ENCODE measurements at regions of chr4 and their contacts with region 1.

Region 1: GRCh38 chr4:44162538-44163270 is 285.9 kb downstream of the KCTD8 start:
- DNase-seq: no peak
- H3K4me3 ChIP-seq: no peak overlapping the region
- H3K27ac ChIP-seq: no peak overlapping the region
- H3K4me1 ChIP-seq: no peaks in the 10 kb centered on the region
- H3K27me3 ChIP-seq: no peaks in the 10 kb centered on the region
- CTCF ChIP-seq: no peak

Region 2: GRCh38 chr4:44287505-44287904 is 124.8 kb after region 1 on chr4:
- intact Hi-C with region 1: no loop called
- DNase-seq: no peak
- H3K4me3 ChIP-seq: no peak overlapping the region
- H3K27ac ChIP-seq: no peak overlapping the region
- H3K4me1 ChIP-seq: no peaks in the 10 kb centered on the region
- H3K27me3 ChIP-seq: no peaks in the 10 kb centered on the region
- CTCF ChIP-seq: no peak

Region 3: GRCh38 chr4:44859477-44859876 is 696.8 kb after region 1 on chr4:
- intact Hi-C with region 1: loop called (anchors 10 kb)
- DNase-seq: no peak
- H3K4me3 ChIP-seq: no peak overlapping the region
- H3K27ac ChIP-seq: no peak overlapping the region
- H3K4me1 ChIP-seq: peaks cover 13% of the 10 kb centered on the region
- H3K27me3 ChIP-seq: no peaks in the 10 kb centered on the region
- CTCF ChIP-seq: no peak